ENCODE measurements at regions of chr4 and their contacts with region 1.

Region 1: GRCh38 chr4:95087657-95088455 is 330.1 kb downstream of the BMPR1B start:
- DNase-seq: no peak
- H3K4me3 ChIP-seq: no peak overlapping the region
- H3K27ac ChIP-seq: no peak overlapping the region
- H3K4me1 ChIP-seq: peaks cover 36% of the 10 kb centered on the region
- H3K27me3 ChIP-seq: no peaks in the 10 kb centered on the region
- CTCF ChIP-seq: no peak

Region 2: DNA sequence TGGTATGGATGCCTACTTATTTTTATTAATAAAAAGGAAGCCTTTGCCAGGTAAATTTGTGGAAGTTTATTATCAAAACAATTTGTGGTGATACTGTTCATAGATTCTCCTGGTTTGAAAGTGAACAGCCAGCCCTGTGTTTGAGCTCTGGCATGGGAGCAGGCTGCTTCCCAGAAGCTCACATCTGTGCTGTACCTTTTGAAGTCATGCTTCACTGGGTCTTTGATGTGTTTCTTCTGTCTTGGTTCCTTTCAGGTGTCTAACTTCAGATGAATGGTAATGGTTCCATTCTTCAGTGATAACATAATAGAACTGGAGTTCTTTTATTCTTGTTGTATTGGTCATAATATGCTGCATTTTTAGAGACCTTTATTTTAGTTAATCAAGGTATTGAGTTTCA is 244.6 kb before region 1 on chr4:
- CTCF ChIA-PET with region 1: no interaction called
- POLR2A ChIA-PET with region 1: no interaction called
- intact Hi-C with region 1: loop called (anchors 5 kb)
- DNase-seq: no peak
- H3K4me3 ChIP-seq: no peak overlapping the region
- H3K27ac ChIP-seq: no peak overlapping the region
- H3K4me1 ChIP-seq: no peaks in the 10 kb centered on the region
- H3K27me3 ChIP-seq: no peaks in the 10 kb centered on the region
- CTCF ChIP-seq: no peak

Region 3: GRCh38 chr4:94917146-94917545 is 170.7 kb before region 1 on chr4:
- CTCF ChIA-PET with region 1: no interaction called
- POLR2A ChIA-PET with region 1: no interaction called
- intact Hi-C with region 1: no loop called
- DNase-seq: no peak
- H3K4me3 ChIP-seq: no peak overlapping the region
- H3K27ac ChIP-seq: no peak overlapping the region
- H3K4me1 ChIP-seq: no peaks in the 10 kb centered on the region
- H3K27me3 ChIP-seq: no peaks in the 10 kb centered on the region
- CTCF ChIP-seq: no peak

Region 4: DNA sequence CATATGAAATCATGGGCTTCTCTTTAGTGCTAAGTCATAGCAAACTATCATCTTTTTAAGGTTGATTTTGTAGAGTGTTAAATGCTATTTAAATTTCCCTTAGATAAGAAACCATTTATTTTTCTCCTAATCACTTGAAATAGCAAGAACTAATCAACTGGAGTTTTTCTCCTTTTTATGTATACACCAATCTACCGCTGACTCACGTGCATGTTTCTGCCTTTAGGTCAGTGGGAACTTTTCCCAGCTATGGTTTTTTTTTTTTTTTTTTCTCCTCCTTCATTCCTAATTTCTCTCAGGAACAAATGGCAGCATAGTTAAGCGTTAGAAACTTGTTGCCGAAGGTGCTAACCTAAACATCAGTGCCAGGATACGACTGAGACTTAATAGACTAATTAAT is 153.7 kb before region 1 on chr4:
- CTCF ChIA-PET with region 1: no interaction called
- POLR2A ChIA-PET with region 1: no interaction called
- intact Hi-C with region 1: loop called (anchors 2 kb)
- DNase-seq: no peak
- H3K4me3 ChIP-seq: no peak overlapping the region
- H3K27ac ChIP-seq: peak overlapping the region; percentile 63
- H3K4me1 ChIP-seq: peaks cover 19% of the 10 kb centered on the region
- H3K27me3 ChIP-seq: no peaks in the 10 kb centered on the region
- CTCF ChIP-seq: no peak

Region 5: GRCh38 chr4:95272797-95273196 is 184.9 kb after region 1 on chr4:
- CTCF ChIA-PET with region 1: no interaction called
- POLR2A ChIA-PET with region 1: no interaction called
- intact Hi-C with region 1: no loop called
- DNase-seq: no peak
- H3K4me3 ChIP-seq: no peak overlapping the region
- H3K27ac ChIP-seq: no peak overlapping the region
- H3K4me1 ChIP-seq: no peaks in the 10 kb centered on the region
- H3K27me3 ChIP-seq: no peaks in the 10 kb centered on the region
- CTCF ChIP-seq: no peak

Region 6: GRCh38 chr4:95465010-95465409 is 377.2 kb after region 1 on chr4:
- CTCF ChIA-PET with region 1: no interaction called
- POLR2A ChIA-PET with region 1: no interaction called
- intact Hi-C with region 1: no loop called
- DNase-seq: no peak
- H3K4me3 ChIP-seq: no peak overlapping the region
- H3K27ac ChIP-seq: no peak overlapping the region
- H3K4me1 ChIP-seq: no peaks in the 10 kb centered on the region
- H3K27me3 ChIP-seq: no peaks in the 10 kb centered on the region
- CTCF ChIP-seq: no peak

Measured in PC-9 (cell line).